ENCODE measurements at regions of chr16 and their contacts with region 1.

Region 1: GRCh38 chr16:30429678-30430427 is at the start of gene DCTPP1:
- DNase-seq: peak; percentile 99
- ATAC-seq: peak; percentile 97
- H3K4me3 ChIP-seq: peak within 1 kb of the TSS; percentile 78 to 98 (median 85)
- H3K4me3 Mint-ChIP-seq: no peak within 1 kb of the TSS
- H3K27ac ChIP-seq: peak within 1 kb of the TSS; percentile 79 to 86
- H3K27ac Mint-ChIP-seq: peak within 1 kb of the TSS; percentile 20
- H3K4me1 ChIP-seq: peaks cover 12 to 21% of the 10 kb centered on the region in 2 donors
- H3K4me1 Mint-ChIP-seq: peaks cover 17% of the 10 kb centered on the region
- H3K27me3 ChIP-seq: no peaks in the 10 kb centered on the region
- H3K27me3 Mint-ChIP-seq: no peaks in the 10 kb centered on the region
- CTCF ChIP-seq: peak; percentile 82
- total RNA-seq, gene DCTPP1: 25.0 and 28.9 TPM in 2 replicates

Region 2: DNA sequence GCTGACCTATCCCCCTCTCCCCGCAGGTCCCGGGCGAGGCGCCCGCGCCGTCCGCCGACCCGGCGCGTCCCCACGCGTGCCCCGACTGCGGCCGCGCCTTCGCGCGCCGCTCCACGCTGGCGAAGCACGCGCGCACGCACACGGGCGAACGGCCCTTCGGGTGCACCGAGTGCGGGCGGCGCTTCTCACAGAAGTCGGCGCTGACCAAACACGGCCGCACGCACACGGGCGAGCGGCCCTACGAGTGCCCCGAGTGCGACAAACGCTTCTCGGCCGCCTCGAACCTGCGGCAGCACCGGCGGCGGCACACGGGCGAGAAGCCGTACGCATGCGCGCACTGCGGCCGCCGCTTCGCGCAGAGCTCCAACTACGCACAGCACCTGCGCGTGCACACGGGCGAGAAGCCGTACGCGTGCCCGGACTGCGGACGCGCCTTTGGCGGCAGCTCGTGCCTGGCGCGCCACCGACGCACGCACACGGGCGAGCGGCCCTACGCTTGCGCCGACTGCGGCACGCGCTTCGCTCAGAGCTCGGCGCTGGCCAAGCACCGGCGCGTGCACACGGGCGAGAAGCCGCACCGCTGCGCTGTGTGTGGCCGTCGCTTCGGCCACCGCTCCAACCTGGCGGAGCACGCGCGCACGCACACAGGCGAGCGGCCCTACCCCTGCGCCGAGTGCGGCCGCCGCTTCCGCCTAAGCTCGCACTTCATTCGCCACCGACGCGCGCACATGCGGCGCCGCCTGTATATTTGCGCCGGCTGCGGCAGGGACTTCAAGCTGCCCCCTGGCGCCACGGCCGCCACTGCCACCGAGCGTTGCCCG is 12.1 kb before region 1 on chr16:
- CTCF ChIA-PET with region 1: interaction called, 43 read pairs
- POLR2A ChIA-PET with region 1: interaction called, 18 read pairs
- intact Hi-C with region 1: loop called (anchors 1 kb)
- DNase-seq: peak; percentile 95
- ATAC-seq: peak; percentile 87
- H3K4me3 ChIP-seq: peak overlapping the region; percentile 33 to 75 (median 66)
- H3K4me3 Mint-ChIP-seq: peak overlapping the region; percentile 77
- H3K27ac ChIP-seq: peak overlapping the region; percentile 47 to 73
- H3K27ac Mint-ChIP-seq: peak overlapping the region; percentile 72
- H3K4me1 ChIP-seq: peaks cover 5 to 12% of the 10 kb centered on the region in 2 donors
- H3K4me1 Mint-ChIP-seq: peaks cover 7% of the 10 kb centered on the region
- H3K27me3 ChIP-seq: no peaks in the 10 kb centered on the region
- H3K27me3 Mint-ChIP-seq: no peaks in the 10 kb centered on the region
- CTCF ChIP-seq: peak; percentile 17

Region 3: GRCh38 chr16:30534368-30535105 is 104.7 kb after region 1 on chr16 and contains the start of gene ZNF747:
- CTCF ChIA-PET with region 1: interaction called, 55 read pairs
- POLR2A ChIA-PET with region 1: interaction called, 14 read pairs
- intact Hi-C with region 1: loop called (anchors 1 kb)
- DNase-seq: peak; percentile 93
- ATAC-seq: peak; percentile 82
- H3K4me3 ChIP-seq: peak within 1 kb of the TSS; percentile 80 to 93 (median 88)
- H3K4me3 Mint-ChIP-seq: peak within 1 kb of the TSS; percentile 98
- H3K27ac ChIP-seq: peak within 1 kb of the TSS; percentile 89 to 94
- H3K27ac Mint-ChIP-seq: peak within 1 kb of the TSS; percentile 94
- H3K4me1 ChIP-seq: peaks cover 8 to 23% of the 10 kb centered on the region in 2 donors
- H3K4me1 Mint-ChIP-seq: peaks cover 33% of the 10 kb centered on the region
- H3K27me3 ChIP-seq: no peaks in the 10 kb centered on the region
- H3K27me3 Mint-ChIP-seq: no peaks in the 10 kb centered on the region
- CTCF ChIP-seq: no peak
- total RNA-seq, gene ZNF747: 17.3 and 27.1 TPM in 2 replicates

Region 4: GRCh38 chr16:30585400-30586189 is 155.7 kb after region 1 on chr16 and contains the start of gene ZNF785:
- CTCF ChIA-PET with region 1: interaction called, 5 read pairs
- POLR2A ChIA-PET with region 1: interaction called, 3 read pairs
- intact Hi-C with region 1: loop called (anchors 1 kb)
- DNase-seq: peak; percentile 95
- ATAC-seq: peak; percentile 99
- H3K4me3 ChIP-seq: peak within 1 kb of the TSS; percentile 56 to 89 (median 75)
- H3K4me3 Mint-ChIP-seq: peak within 1 kb of the TSS; percentile 85
- H3K27ac ChIP-seq: peak within 1 kb of the TSS; percentile 29 to 82
- H3K27ac Mint-ChIP-seq: peak within 1 kb of the TSS; percentile 71
- H3K4me1 ChIP-seq: peaks cover 8 to 21% of the 10 kb centered on the region in 2 donors
- H3K4me1 Mint-ChIP-seq: peaks cover 22% of the 10 kb centered on the region
- H3K27me3 ChIP-seq: no peaks in the 10 kb centered on the region
- H3K27me3 Mint-ChIP-seq: no peaks in the 10 kb centered on the region
- CTCF ChIP-seq: no peak
- total RNA-seq, gene ZNF785: 39.7 and 44.6 TPM in 2 replicates

Region 5: GRCh38 chr16:31073968-31074813 is 644.3 kb after region 1 on chr16 and contains the starts of genes ZNF646 and ZNF668:
- CTCF ChIA-PET with region 1: no interaction called
- POLR2A ChIA-PET with region 1: no interaction called
- intact Hi-C with region 1: no loop called
- DNase-seq: peak; percentile 99
- ATAC-seq: peak; percentile 86
- H3K4me3 ChIP-seq: peak within 1 kb of the TSS; percentile 73 to 99 (median 91)
- H3K4me3 Mint-ChIP-seq: peak within 1 kb of the TSS; percentile 95
- H3K27ac ChIP-seq: peak within 1 kb of the TSS; percentile 78 to 89
- H3K27ac Mint-ChIP-seq: peak within 1 kb of the TSS; percentile 96
- H3K4me1 ChIP-seq: peaks cover 20 to 25% of the 10 kb centered on the region in 2 donors
- H3K4me1 Mint-ChIP-seq: peaks cover 36% of the 10 kb centered on the region
- H3K27me3 ChIP-seq: no peaks in the 10 kb centered on the region
- H3K27me3 Mint-ChIP-seq: no peaks in the 10 kb centered on the region
- CTCF ChIP-seq: no peak
- total RNA-seq, gene ZNF646: 45.9 and 51.7 TPM in 2 replicates
- total RNA-seq, gene ZNF668: 11.1 and 12.0 TPM in 2 replicates

Measured in B cell (primary cell).